CD14-positive monocyte (primary cell): ENCODE measurements at regions of chr20 and their contacts with region 1.

Region 1: GRCh38 chr20:38893565-38894090 is 32.6 kb upstream of the FAM83D start:
- DNase-seq: peak; percentile 42 to 51 (median 47)
- H3K4me3 ChIP-seq: no peak overlapping the region
- H3K4me3 Mint-ChIP-seq: no peak overlapping the region
- H3K27ac ChIP-seq: no peak overlapping the region
- H3K27ac Mint-ChIP-seq: peak overlapping the region in 1 of 7 donors; percentile 73
- H3K4me1 ChIP-seq: no peaks in the 10 kb centered on the region
- H3K4me1 Mint-ChIP-seq: peaks cover 8% of the 10 kb centered on the region
- H3K27me3 ChIP-seq: no peaks in the 10 kb centered on the region
- H3K27me3 Mint-ChIP-seq: peaks cover 0 to 9% (median 2%) of the 10 kb centered on the region in 3 donors
- CTCF ChIP-seq: peak; percentile 89

Region 2: DNA sequence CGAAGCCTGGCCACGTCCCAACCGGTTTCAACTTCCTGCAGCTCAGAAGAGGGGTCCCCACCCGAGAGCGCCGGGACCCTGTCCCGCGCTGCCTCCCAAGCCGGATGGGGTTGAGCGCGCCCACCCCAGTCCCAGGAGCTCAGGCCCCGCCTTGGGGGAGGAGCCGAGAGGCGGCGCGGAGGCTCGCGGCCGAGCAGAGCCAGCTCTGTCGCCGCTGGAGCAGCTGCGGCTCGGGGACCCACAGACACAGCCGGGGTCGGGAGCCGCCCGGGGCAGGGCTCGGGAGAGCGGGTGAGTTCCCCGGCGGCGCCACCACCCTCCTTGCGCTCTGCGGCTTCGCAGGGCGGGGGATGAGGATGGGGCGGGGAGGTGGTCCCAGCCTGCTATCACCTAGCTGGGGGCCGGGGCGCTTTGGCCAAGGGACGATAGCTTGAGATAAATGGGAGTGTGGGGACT is 88.1 kb before region 1 on chr20 and contains the start of gene PPP1R16B:
- intact Hi-C with region 1: loop called in 1 of 2 experiments (anchors 10 kb)
- DNase-seq: peak in 1 of 3 donors; percentile 17
- H3K4me3 ChIP-seq: peak within 1 kb of the TSS; percentile 66 to 95 (median 83)
- H3K4me3 Mint-ChIP-seq: peak within 1 kb of the TSS; percentile 90 to 93
- H3K27ac ChIP-seq: peak within 1 kb of the TSS; percentile 7 to 78
- H3K27ac Mint-ChIP-seq: peak within 1 kb of the TSS in 6 of 7 donors; percentile 68 to 90 (median 80)
- H3K4me1 ChIP-seq: peaks cover 49 to 56% of the 10 kb centered on the region in 2 donors
- H3K4me1 Mint-ChIP-seq: peaks cover 47% of the 10 kb centered on the region
- H3K27me3 ChIP-seq: peaks cover 0 to 29% of the 10 kb centered on the region in 2 donors
- H3K27me3 Mint-ChIP-seq: peaks cover 4 to 31% (median 30%) of the 10 kb centered on the region in 3 donors
- CTCF ChIP-seq: no peak
- polyA plus RNA-seq, gene PPP1R16B: 1.1 to 4.4 (median 1.4) TPM